Dorsolateral prefrontal cortex (tissue), 120 donors: ENCODE measurements at regions of chr2 and their contacts with region 1.

Region 1: DNA sequence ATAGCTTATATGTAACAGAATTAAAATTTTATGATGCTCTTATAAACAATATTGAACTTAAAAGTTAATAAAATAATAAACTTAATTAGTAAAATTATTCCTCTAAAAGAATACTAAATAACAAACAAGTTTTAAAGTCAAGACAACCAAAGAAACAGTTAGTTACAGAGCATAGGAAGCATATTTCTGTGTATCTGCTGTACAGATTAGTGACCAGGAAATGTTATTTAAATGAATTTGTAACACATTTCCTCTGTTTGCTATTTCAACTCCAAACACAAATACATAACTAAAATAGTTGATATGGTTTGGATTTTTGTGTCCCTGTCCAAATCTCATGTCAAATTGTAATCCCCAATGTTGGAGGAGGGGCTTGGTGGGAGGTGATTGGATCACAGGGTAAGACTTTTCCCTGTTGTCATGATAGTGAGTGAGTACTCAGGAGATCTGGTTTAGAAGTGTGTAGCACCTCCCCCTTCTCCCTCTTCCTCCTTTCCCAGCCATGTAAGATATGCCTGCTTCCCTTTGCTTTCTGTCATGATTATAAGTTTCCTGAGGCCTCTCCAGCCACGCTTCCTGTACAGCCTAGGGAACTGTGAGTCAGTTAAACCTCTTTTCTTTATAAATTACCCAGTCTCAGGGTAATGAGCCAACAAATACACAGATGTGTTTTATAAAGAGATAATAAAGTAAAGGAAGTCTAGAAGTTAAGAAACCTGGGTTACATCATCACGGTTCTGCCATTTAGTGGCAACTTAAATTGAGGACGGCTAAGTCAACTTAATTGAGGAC is 51.8 kb downstream of the ROCK2 start:
- DNase-seq: no peak
- H3K4me3 ChIP-seq: no peak overlapping the region
- H3K27ac ChIP-seq: peak overlapping the region in 1 of 59 donors; percentile 20
- H3K27me3 ChIP-seq: no peaks in the 10 kb centered on the region
- CTCF ChIP-seq: no peak

Region 2: DNA sequence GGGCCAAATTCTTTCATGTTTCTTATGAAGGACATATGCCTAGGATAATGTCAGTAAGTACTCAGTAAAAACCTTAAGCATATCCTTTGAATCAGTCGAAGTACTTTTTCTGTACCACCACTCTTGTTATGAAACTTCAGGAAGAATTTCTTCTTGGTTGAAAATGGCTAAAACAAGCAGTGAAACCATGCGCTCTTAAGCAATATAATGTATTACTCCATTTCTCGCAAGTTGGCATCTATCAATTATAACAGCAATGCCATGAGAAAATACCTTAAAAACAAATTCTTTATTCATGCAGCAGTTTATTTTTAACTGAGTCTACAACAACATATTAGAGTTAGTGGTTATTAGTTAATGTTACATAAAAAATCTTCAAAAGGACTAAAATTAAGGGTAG is 96.4 kb before region 1 on chr2:
- intact Hi-C with region 1: no loop called
- DNase-seq: no peak
- H3K4me3 ChIP-seq: no peak overlapping the region
- H3K27ac ChIP-seq: no peak overlapping the region
- H3K27me3 ChIP-seq: no peaks in the 10 kb centered on the region
- CTCF ChIP-seq: no peak

Region 3: DNA sequence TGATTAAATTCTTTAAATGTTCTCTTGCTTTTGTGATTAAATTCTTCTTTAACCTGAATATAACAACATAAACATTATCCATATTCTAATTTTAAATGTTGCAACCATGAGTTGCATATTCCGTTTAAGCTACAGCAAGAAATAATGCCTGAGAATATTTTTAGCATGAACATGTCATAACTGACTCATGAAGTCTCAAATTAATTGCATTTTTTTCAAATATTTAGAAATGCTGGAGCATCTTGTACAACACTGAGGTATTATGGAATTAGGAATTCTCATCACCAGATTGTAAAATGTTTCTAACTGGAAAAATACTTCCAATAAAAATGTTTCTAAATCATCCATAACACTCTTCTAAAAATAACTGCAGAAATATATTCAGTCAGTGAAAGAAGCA is 37.1 kb after region 1 on chr2:
- intact Hi-C with region 1: loop called in 1 of 2 experiments (anchors 2 kb)
- DNase-seq: no peak
- H3K4me3 ChIP-seq: no peak overlapping the region
- H3K27ac ChIP-seq: peak overlapping the region in 5 of 59 donors; percentile 3 to 24 (median 6)
- H3K27me3 ChIP-seq: no peaks in the 10 kb centered on the region
- CTCF ChIP-seq: no peak